Activated B cell treated with CpG ODN at 0.5 μM for 24 hours (primary cell): ENCODE measurements at regions of chr17 and their contacts with region 1.

Region 1: DNA sequence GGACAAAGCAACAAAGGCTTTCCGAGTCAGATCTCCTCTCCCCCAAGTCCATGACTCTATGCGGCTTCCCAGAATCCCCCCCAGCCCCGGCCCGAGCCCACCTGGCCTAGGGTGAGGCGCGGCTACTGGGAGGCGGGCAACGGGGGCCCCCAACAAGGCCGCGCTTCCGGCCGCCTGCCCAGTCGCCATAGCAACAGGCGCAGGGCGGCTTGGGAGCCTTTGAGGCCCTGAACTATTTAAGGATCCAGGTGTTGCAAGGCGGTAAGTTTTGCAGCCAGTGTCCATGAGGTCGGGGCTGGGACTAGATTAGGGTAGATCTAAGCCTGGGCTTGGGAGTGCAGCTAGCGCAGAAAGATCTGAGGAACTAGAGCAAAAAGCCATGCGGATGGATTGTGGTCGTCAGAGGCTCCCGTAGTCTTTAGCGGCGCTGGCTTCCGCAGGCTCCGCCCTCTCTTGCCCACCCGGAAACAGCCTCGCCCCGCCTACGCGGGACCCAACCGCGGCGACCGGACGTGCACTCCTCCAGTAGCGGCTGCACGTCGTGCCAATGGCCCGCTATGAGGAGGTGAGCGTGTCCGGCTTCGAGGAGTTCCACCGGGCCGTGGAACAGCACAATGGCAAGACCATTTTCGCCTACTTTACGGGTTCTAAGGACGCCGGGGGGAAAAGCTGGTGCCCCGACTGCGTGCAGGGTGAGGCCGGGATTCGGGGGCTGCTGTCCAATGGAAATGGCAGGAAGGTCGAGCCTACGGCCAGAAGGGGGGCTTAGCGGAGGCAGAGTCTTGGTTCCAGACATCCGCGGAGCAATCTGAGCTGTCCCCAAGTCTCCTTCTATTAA is at the starts of genes KIAA0753 and TXNDC17:
- DNase-seq: peak; percentile 91
- ATAC-seq: peak; percentile 94
- H3K4me3 Mint-ChIP-seq: peak within 1 kb of the TSS; percentile 96
- H3K27ac Mint-ChIP-seq: peak within 1 kb of the TSS; percentile 99
- H3K4me1 Mint-ChIP-seq: peaks cover 46% of the 10 kb centered on the region
- H3K27me3 Mint-ChIP-seq: no peaks in the 10 kb centered on the region
- CTCF ChIP-seq: no peak
- total RNA-seq, gene KIAA0753: 21.0 and 24.7 TPM in 2 replicates
- total RNA-seq, gene TXNDC17: 42.7 and 54.5 TPM in 2 replicates

Region 2: GRCh38 chr17:5584383-5585286 is 1056.1 kb before region 1 on chr17 and contains the start of gene NLRP1:
- CTCF ChIA-PET with region 1: no interaction called
- POLR2A ChIA-PET with region 1: no interaction called
- intact Hi-C with region 1: loop called (anchors 10 kb)
- DNase-seq: peak; percentile 78
- ATAC-seq: peak; percentile 96
- H3K4me3 Mint-ChIP-seq: peak within 1 kb of the TSS; percentile 92
- H3K27ac Mint-ChIP-seq: peak within 1 kb of the TSS; percentile 93
- H3K4me1 Mint-ChIP-seq: peaks cover 66% of the 10 kb centered on the region
- H3K27me3 Mint-ChIP-seq: no peaks in the 10 kb centered on the region
- CTCF ChIP-seq: no peak
- total RNA-seq, gene NLRP1: 35.5 and 40.4 TPM in 2 replicates

Region 3: GRCh38 chr17:6443692-6444569 is 196.8 kb before region 1 on chr17 and contains the start of gene PIMREG:
- CTCF ChIA-PET with region 1: no interaction called
- POLR2A ChIA-PET with region 1: no interaction called
- intact Hi-C with region 1: loop called (anchors 2 kb)
- DNase-seq: peak; percentile 83
- ATAC-seq: peak; percentile 94
- H3K4me3 Mint-ChIP-seq: peak within 1 kb of the TSS; percentile 86
- H3K27ac Mint-ChIP-seq: peak within 1 kb of the TSS; percentile 74
- H3K4me1 Mint-ChIP-seq: peaks cover 13% of the 10 kb centered on the region
- H3K27me3 Mint-ChIP-seq: peaks cover 14% of the 10 kb centered on the region
- CTCF ChIP-seq: no peak
- total RNA-seq, gene PIMREG: 0.27 and 0.69 TPM in 2 replicates

Region 4: DNA sequence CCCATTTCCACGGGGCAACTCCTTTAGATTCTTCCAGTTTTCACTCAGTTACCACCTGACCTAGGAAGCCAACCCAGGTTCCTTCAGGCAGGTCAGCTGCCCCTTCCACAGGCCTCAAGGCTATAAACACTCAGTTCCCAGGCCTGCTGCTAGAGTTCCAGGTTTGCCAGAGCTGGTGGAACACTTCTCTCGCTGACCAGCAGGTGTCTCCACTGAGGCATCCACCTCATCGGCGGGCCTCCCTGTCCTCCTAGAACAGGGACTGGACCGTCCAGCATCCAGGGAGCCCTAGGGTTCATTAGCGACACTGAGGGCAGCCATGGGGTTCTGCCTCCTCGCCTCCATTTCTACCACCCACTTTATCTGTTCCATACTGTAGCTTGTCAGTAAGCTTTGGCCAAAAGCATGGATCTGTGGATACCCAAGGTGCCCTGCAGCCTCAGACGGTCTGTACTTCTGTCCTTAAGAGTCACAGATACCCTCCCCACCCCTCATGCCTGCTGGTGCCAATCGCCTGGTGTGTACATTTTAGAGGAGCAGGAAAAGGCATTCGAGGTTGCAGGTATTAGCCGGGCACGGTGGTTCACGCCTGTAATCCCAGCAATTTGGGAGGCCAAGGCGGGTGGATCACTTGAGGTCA is 167.5 kb before region 1 on chr17:
- CTCF ChIA-PET with region 1: interaction called, 3 read pairs
- POLR2A ChIA-PET with region 1: no interaction called
- intact Hi-C with region 1: loop called (anchors 2 kb)
- DNase-seq: peak; percentile 49
- ATAC-seq: peak; percentile 65
- H3K4me3 Mint-ChIP-seq: no peak overlapping the region
- H3K27ac Mint-ChIP-seq: no peak overlapping the region
- H3K4me1 Mint-ChIP-seq: peaks cover 3% of the 10 kb centered on the region
- H3K27me3 Mint-ChIP-seq: peaks cover 3% of the 10 kb centered on the region
- CTCF ChIP-seq: peak; percentile 93

Region 5: GRCh38 chr17:6651357-6651918 is 10.7 kb after region 1 on chr17 and contains the starts of genes C17orf100 and MED31:
- CTCF ChIA-PET with region 1: no interaction called
- POLR2A ChIA-PET with region 1: interaction called, 28 read pairs
- intact Hi-C with region 1: loop called (anchors 1 kb)
- DNase-seq: peak; percentile 97
- ATAC-seq: peak; percentile 90
- H3K4me3 Mint-ChIP-seq: peak within 1 kb of the TSS; percentile 100
- H3K27ac Mint-ChIP-seq: peak within 1 kb of the TSS; percentile 100
- H3K4me1 Mint-ChIP-seq: peaks cover 69% of the 10 kb centered on the region
- H3K27me3 Mint-ChIP-seq: no peaks in the 10 kb centered on the region
- CTCF ChIP-seq: no peak
- total RNA-seq, gene C17orf100: 2.9 and 3.5 TPM in 2 replicates
- total RNA-seq, gene MED31: 16.5 and 23.4 TPM in 2 replicates

Region 6: DNA sequence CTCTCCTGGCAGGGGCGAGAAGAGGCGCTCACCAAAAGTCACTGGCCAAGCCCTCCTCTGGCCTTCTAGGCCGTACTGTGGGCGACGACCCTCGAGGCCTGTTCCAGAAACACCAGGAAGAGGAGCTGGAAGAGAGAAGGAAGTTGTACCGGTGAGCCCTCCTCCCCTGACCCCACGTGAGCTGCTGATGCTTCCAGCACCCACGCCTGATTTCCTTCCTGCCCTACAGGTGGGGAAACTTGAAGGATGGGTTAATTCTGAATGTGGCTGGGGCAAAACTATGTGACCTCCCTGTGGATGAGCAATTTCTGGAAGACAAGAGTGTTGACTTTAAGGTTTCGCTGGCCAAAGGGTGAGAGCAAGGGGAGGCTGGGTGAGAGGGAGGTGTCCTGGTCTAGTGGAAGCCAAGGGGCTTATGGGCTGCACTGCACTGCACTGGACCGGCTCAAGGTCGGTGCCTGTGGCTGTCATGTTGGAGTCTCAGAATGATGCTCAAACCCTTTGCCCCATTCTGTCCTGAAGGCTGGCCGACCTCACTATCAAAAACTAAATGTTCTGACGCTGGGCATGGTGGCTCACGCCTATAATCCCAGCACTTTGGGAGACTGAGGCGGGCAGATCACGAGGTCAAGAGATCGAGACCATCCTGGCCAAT is 17.0 kb after region 1 on chr17:
- CTCF ChIA-PET with region 1: no interaction called
- POLR2A ChIA-PET with region 1: interaction called, 10 read pairs
- intact Hi-C with region 1: no loop called
- DNase-seq: no peak
- ATAC-seq: no peak
- H3K4me3 Mint-ChIP-seq: peak overlapping the region; percentile 88
- H3K27ac Mint-ChIP-seq: peak overlapping the region; percentile 76
- H3K4me1 Mint-ChIP-seq: peaks cover 73% of the 10 kb centered on the region
- H3K27me3 Mint-ChIP-seq: no peaks in the 10 kb centered on the region
- CTCF ChIP-seq: no peak